ENCODE measurements at regions of chr3 and their contacts with region 1.

Region 1: GRCh38 chr3:31960793-31961431 is 20.1 kb downstream of the OSBPL10 start:
- DNase-seq: peak; percentile 47 to 48
- H3K4me3 ChIP-seq: no peak overlapping the region
- H3K27ac ChIP-seq: no peak overlapping the region
- H3K4me1 ChIP-seq: peaks cover 8% of the 10 kb centered on the region; the same call in 1 of the 2 replicates
- H3K27me3 ChIP-seq: no peaks in the 10 kb centered on the region
- CTCF ChIP-seq: no peak

Region 2: GRCh38 chr3:30613133-30613825 is 1347.6 kb before region 1 on chr3:
- CTCF ChIA-PET with region 1: no interaction called
- POLR2A ChIA-PET with region 1: interaction called, 38 read pairs
- intact Hi-C with region 1: no loop called
- DNase-seq: no peak
- H3K4me3 ChIP-seq: no peak overlapping the region
- H3K27ac ChIP-seq: no peak overlapping the region
- H3K4me1 ChIP-seq: peaks cover 21% of the 10 kb centered on the region
- H3K27me3 ChIP-seq: no peaks in the 10 kb centered on the region
- CTCF ChIP-seq: no peak

Region 3: GRCh38 chr3:31648286-31648968 is 312.5 kb before region 1 on chr3:
- CTCF ChIA-PET with region 1: no interaction called
- POLR2A ChIA-PET with region 1: interaction called, 12 read pairs
- intact Hi-C with region 1: no loop called
- DNase-seq: no peak
- H3K4me3 ChIP-seq: no peak overlapping the region
- H3K27ac ChIP-seq: no peak overlapping the region
- H3K4me1 ChIP-seq: no peaks in the 10 kb centered on the region
- H3K27me3 ChIP-seq: no peaks in the 10 kb centered on the region
- CTCF ChIP-seq: no peak

Region 4: GRCh38 chr3:32238453-32239306 is 277.8 kb after region 1 on chr3 and contains the start of gene CMTM8:
- CTCF ChIA-PET with region 1: no interaction called
- POLR2A ChIA-PET with region 1: no interaction called
- intact Hi-C with region 1: no loop called
- DNase-seq: peak; percentile 37 to 70
- H3K4me3 ChIP-seq: peak within 1 kb of the TSS; percentile 72
- H3K27ac ChIP-seq: no peak within 1 kb of the TSS
- H3K4me1 ChIP-seq: peaks cover 17% of the 10 kb centered on the region; the same call in 1 of the 2 replicates
- H3K27me3 ChIP-seq: no peaks in the 10 kb centered on the region
- CTCF ChIP-seq: no peak
- total RNA-seq, gene CMTM8: 16.8 and 17.8 TPM in 2 replicates